ENCODE measurements at regions of chr22 and their contacts with region 1.

Region 1: DNA sequence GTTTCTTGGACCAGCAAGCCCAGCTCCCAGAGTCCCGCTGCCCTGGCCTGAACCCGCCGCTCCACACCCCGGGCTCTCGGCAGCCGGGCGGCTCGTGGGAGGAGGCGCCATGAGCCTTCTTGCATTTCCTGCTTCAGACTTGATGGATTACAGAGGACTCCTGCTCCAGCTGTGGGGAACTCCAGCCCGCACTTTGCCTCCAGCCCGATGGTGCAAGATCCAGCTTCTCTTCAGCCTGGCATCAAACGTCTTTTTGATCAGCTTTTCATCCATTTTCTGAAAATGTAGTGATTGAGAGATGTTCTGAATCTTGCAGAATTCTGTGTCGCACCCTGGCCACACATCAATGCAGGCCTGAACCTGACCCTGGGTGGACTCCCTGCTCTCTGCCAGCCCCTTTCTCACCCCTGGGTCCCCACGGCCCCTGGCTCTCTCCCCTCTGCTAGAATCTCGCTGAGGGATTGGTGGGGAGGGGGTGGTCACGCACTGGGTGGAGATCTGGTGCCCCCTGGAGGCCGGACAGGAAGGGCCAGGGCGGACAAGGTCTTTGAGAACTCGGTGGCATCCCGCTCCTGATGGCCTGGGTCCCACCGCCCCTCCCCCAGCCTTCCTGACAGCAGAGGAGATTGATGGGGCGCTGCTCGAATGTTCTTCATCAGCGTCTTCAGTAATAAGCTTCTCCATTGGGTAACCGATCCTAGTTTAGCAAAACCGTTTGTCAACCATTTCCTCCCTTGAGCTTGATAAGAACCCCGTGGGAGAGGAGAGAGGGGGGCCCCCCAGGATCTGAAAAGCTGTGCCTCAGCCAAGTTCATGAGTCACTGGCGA is 12.1 kb upstream of the NFAM1 start:
- DNase-seq: peak; percentile 58
- ATAC-seq: peak; percentile 84
- H3K4me3 Mint-ChIP-seq: peak overlapping the region; percentile 69
- H3K27ac Mint-ChIP-seq: no peak overlapping the region
- H3K4me1 Mint-ChIP-seq: peaks cover 33% of the 10 kb centered on the region
- H3K27me3 Mint-ChIP-seq: peaks cover 7% of the 10 kb centered on the region
- CTCF ChIP-seq: no peak

Region 2: DNA sequence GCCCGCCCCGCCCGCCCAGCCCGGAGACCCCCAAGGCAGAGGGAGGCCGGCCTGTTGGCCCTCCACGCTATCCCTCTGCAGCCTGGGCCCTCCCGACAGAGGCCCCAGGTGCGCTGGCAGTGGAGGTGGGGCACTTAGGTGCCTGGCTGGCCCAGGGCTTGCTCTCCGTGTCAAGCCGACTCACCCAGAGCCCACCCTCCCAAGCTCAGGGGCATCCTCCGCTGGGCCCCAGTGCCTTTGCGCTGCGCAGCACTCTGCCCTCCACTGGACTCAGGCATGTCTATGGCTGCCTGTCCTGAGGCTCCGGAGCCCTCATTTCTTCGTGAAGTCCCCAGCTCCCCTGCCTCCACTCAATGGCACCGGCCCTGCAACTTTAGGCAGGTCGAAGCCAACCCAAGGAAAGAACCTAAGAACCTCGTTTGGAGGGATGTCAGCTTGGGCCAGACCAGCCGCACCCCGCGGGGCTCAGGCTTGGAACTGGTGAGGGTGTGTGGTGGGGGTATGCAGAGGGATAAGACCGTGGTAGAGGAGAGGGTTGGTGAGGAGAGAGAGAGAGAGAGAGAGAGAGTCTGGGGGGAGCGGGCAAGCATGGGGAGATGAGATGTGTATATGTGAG is 486.2 kb before region 1 on chr22:
- CTCF ChIA-PET with region 1: no interaction called
- POLR2A ChIA-PET with region 1: no interaction called
- intact Hi-C with region 1: loop called (anchors 5 kb)
- DNase-seq: no peak
- ATAC-seq: no peak
- H3K4me3 Mint-ChIP-seq: no peak overlapping the region
- H3K27ac Mint-ChIP-seq: no peak overlapping the region
- H3K4me1 Mint-ChIP-seq: peaks cover 15% of the 10 kb centered on the region
- H3K27me3 Mint-ChIP-seq: no peaks in the 10 kb centered on the region
- CTCF ChIP-seq: peak; percentile 12

Region 3: DNA sequence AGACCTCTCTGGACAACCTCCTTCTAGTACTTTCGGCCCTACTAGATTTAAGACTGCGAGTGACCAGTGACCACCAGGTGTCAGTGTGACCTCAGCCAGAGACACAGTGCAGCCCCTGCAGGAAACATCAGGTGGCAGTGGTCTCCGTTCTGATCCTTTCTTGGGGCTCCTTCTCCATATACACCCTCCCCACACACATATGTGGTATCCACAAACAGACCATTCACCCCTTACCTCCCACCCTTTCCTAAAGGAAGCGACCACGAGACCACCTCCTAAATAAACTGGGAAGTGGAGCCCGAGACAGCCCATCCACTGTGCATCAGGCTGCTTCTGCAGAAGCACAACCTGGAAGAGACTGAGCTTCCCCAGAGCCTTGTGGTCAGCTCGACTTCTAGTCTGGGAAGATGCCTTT is 275.2 kb before region 1 on chr22:
- CTCF ChIA-PET with region 1: interaction called, 10 read pairs
- POLR2A ChIA-PET with region 1: interaction called, 3 read pairs
- intact Hi-C with region 1: no loop called
- DNase-seq: peak; percentile 48
- ATAC-seq: peak; percentile 79
- H3K4me3 Mint-ChIP-seq: no peak overlapping the region
- H3K27ac Mint-ChIP-seq: no peak overlapping the region
- H3K4me1 Mint-ChIP-seq: peaks cover 34% of the 10 kb centered on the region
- H3K27me3 Mint-ChIP-seq: no peaks in the 10 kb centered on the region
- CTCF ChIP-seq: no peak

Region 4: GRCh38 chr22:42180349-42180842 is 263.9 kb before region 1 on chr22:
- CTCF ChIA-PET with region 1: no interaction called
- POLR2A ChIA-PET with region 1: interaction called, 10 read pairs
- intact Hi-C with region 1: no loop called
- DNase-seq: no peak
- ATAC-seq: no peak
- H3K4me3 Mint-ChIP-seq: no peak overlapping the region
- H3K27ac Mint-ChIP-seq: no peak overlapping the region
- H3K4me1 Mint-ChIP-seq: peaks cover 35% of the 10 kb centered on the region
- H3K27me3 Mint-ChIP-seq: no peaks in the 10 kb centered on the region
- CTCF ChIP-seq: no peak

Region 5: DNA sequence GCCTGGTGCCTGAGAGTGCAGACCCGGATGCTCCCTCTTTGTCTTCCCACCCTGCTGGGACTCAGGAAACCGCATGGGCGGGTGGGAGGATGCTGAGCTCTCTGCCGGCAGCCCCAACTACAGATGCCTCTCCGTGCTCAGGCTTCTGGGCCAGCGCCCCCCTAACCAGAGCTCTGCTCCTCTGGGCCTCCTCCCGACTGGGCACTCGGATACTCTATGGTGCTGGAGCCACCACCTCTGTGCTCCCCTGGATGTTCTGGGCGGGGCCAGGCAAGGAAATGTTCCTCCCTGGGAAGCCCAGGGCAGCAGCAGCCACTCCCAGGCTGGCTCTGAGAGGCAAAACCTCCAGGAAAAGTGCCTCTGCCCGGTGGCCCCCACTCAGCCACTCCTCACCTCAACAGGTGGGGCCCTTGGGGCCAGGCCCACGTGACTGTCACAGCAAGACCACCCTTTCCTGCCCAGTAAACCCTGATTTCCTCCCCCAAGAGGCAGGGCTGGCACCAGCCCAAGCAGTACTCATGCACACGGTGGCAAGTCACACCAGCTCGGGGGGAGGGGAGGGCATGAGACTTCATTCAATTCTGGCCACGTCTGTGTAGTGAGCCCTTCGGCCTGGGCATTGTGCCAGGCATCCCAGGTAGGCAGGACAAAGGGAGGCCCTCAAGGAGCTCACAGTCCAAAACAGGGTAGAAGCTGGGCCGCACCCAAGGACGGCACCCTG is 119.1 kb before region 1 on chr22:
- CTCF ChIA-PET with region 1: no interaction called
- POLR2A ChIA-PET with region 1: no interaction called
- intact Hi-C with region 1: no loop called
- DNase-seq: no peak
- ATAC-seq: no peak
- H3K4me3 Mint-ChIP-seq: no peak overlapping the region
- H3K27ac Mint-ChIP-seq: no peak overlapping the region
- H3K4me1 Mint-ChIP-seq: peaks cover 7% of the 10 kb centered on the region
- H3K27me3 Mint-ChIP-seq: peaks cover 12% of the 10 kb centered on the region
- CTCF ChIP-seq: no peak

Region 6: GRCh38 chr22:42553475-42554361 is 109.4 kb after region 1 on chr22 and contains the start of gene SERHL2:
- CTCF ChIA-PET with region 1: no interaction called
- POLR2A ChIA-PET with region 1: no interaction called
- intact Hi-C with region 1: loop called (anchors 5 kb)
- DNase-seq: peak; percentile 97
- ATAC-seq: peak; percentile 95
- H3K4me3 Mint-ChIP-seq: peak within 1 kb of the TSS; percentile 86
- H3K27ac Mint-ChIP-seq: peak within 1 kb of the TSS; percentile 80
- H3K4me1 Mint-ChIP-seq: peaks cover 52% of the 10 kb centered on the region
- H3K27me3 Mint-ChIP-seq: no peaks in the 10 kb centered on the region
- CTCF ChIP-seq: no peak
- total RNA-seq, gene SERHL2: 0.91 and 1.7 TPM in 2 replicates

Measured in activated B cell treated with CpG ODN at 0.5 μM for 24 hours (primary cell).